ENCODE measurements at regions of chr1 and their contacts with region 1.

Region 1: GRCh38 chr1:161864577-161864976 is 98.5 kb downstream of the ATF6 start:
- DNase-seq: no peak
- H3K4me3 ChIP-seq: no peak overlapping the region
- CTCF ChIP-seq: peak; percentile 54

Region 2: DNA sequence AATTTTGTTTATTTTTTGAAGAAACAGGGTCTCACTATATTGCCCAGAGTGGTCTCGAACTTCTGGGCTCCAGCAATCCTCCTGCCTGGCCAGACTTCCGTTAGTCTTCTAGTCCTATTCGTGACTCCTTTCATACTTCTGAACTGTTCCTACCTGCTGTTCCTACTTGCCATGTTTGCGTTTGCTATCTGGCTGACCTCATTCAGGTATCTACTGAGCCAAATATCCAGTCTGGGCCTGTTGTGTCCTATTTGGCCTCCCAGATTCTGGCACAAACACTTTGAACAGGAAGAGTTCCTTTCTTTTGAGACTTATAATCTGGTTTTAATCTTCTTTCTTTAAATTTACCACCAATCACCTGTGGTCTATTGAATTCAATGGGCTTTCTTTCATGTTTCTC is 619.7 kb before region 1 on chr1:
- CTCF ChIA-PET with region 1: no interaction called
- POLR2A ChIA-PET with region 1: no interaction called
- DNase-seq: no peak
- H3K4me3 ChIP-seq: no peak overlapping the region
- CTCF ChIP-seq: no peak

Region 3: DNA sequence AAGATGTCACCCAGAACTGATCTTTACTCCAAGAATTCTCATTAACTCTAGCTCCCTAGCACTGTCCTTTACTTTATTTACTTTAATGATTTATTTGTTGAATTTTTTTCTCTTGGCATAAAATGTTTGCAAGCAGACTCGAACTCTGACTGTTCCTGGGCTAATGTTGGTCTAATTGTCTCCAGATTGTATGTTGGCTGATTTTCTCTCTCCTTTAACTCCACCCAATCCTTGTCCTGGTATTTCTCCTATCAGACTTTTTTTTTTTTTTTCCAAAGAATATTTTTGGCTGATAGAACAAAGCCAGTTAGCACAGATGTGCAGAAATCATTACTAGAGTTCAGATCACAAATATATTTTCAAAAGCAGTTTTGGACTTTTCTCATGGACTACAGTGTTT is 15.9 kb before region 1 on chr1:
- CTCF ChIA-PET with region 1: interaction called, 15 read pairs
- POLR2A ChIA-PET with region 1: no interaction called
- DNase-seq: no peak
- H3K4me3 ChIP-seq: no peak overlapping the region
- CTCF ChIP-seq: no peak

Region 4: DNA sequence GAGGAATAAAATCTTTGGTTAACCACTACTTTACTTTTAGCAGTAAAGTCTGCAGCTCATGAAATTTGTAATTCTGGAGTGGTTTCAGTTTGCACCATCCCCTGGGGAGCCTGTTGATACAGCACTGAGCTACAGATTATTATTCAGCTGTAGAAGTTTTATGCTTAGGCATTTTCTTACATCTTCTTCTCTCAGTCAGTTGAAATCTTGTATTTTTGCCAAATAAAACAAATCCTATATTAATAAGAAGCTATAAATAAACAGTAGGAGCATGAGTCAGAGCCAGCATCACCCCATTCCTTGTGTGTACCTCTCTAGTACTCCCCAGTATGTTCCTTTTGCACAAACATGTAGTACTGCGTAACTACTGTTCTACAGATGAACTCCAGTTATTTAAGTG is 20.4 kb after region 1 on chr1:
- CTCF ChIA-PET with region 1: interaction called, 18 read pairs
- POLR2A ChIA-PET with region 1: no interaction called
- DNase-seq: peak; percentile 76
- H3K4me3 ChIP-seq: no peak overlapping the region
- CTCF ChIP-seq: no peak

Region 5: GRCh38 chr1:162023547-162024501 is 159.2 kb after region 1 on chr1 and contains the start of gene OLFML2B:
- CTCF ChIA-PET with region 1: interaction called, 13 read pairs
- POLR2A ChIA-PET with region 1: no interaction called
- DNase-seq: peak; percentile 46
- H3K4me3 ChIP-seq: peak within 1 kb of the TSS; percentile 77
- CTCF ChIP-seq: peak; percentile 39

Measured in AG04449 (cell line).